BJ (cell line): ENCODE measurements at regions of chr2 and their contacts with region 1.

Region 1: GRCh38 chr2:223888251-223888650 is 50.9 kb upstream of the AP1S3 start:
- DNase-seq: no peak
- H3K4me3 ChIP-seq: no peak overlapping the region
- H3K27me3 ChIP-seq: no peaks in the 10 kb centered on the region
- CTCF ChIP-seq: no peak

Region 2: GRCh38 chr2:223877731-223878435 is 10.4 kb before region 1 on chr2:
- CTCF ChIA-PET with region 1: no interaction called
- POLR2A ChIA-PET with region 1: interaction called, 14 read pairs
- DNase-seq: no peak
- H3K4me3 ChIP-seq: no peak overlapping the region
- H3K27me3 ChIP-seq: no peaks in the 10 kb centered on the region
- CTCF ChIP-seq: no peak